A549 (cell line): ENCODE measurements at regions of chr17 and their contacts with region 1.

Region 1: DNA sequence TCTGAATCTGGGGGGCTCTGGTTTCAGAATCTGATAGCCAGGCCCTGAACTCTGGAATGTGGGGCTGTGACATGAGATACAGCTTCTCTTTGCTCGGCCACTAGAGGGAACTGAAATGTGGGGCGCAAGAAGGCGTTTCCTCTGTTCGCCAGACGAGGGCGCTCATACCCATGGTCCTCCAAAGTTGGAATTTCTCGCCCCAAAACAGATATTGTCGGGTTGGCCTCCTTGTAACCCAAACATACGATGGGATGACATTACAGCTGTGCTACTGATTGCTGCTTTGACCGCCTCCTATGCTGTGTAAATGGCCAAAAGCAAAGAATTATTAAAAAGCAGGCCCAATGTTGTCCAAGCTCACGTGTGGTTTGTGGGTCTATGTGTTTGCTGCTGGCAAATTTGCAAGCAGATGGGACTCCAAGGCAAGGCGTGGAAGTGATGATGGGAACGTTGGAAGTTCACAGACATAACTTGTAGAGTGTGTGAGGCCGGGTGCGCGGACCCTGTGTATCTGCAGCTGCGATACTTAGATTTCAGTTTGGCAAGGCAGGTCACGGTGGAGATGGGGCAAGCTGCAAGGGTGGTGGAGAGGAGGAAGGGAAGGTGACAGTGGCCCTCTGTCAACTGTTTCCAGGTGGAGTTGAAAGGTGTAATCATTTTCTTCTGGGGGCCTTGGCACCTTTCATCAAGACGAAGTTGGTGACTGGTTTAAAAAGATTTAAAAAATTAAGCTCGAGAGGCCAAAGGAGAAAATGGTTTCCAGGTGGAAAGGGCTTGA is 13.0 kb upstream of the MSI2 start:
- DNase-seq: peak; percentile 77 to 88
- ATAC-seq: peak; percentile 83 to 95
- H3K4me3 ChIP-seq: no peak overlapping the region
- H3K27ac ChIP-seq: peak overlapping the region; percentile 15 to 47; a peak in 3 of 6 replicates
- H3K4me1 ChIP-seq: peaks cover 8% of the 10 kb centered on the region; the same call in 1 of the 3 replicates
- CTCF ChIP-seq: peak; percentile 100
- EP300 ChIP-seq: no peak
- POLR2A ChIP-seq: no peak
- RAD21 ChIP-seq: peak; percentile 99

Region 2: GRCh38 chr17:56392051-56392673 is 851.2 kb before region 1 on chr17:
- CTCF ChIA-PET with region 1: no interaction called
- POLR2A ChIA-PET with region 1: no interaction called
- DNase-seq: no peak
- ATAC-seq: peak in 1 of 2 experiments; percentile 59; a peak in 2 of 6 replicates
- H3K4me3 ChIP-seq: no peak overlapping the region
- H3K27ac ChIP-seq: no peak overlapping the region
- H3K4me1 ChIP-seq: no peaks in the 10 kb centered on the region
- CTCF ChIP-seq: no peak
- EP300 ChIP-seq: no peak
- POLR2A ChIP-seq: no peak
- RAD21 ChIP-seq: no peak

Region 3: GRCh38 chr17:56908001-56908542 is 335.3 kb before region 1 on chr17:
- CTCF ChIA-PET with region 1: no interaction called
- POLR2A ChIA-PET with region 1: no interaction called
- DNase-seq: peak in 1 of 2 experiments; percentile 53
- ATAC-seq: peak; percentile 33 to 39; a peak in 3 of 6 replicates
- H3K4me3 ChIP-seq: no peak overlapping the region
- H3K27ac ChIP-seq: no peak overlapping the region
- H3K4me1 ChIP-seq: peaks cover 29% of the 10 kb centered on the region; the same call in 2 of the 3 replicates
- CTCF ChIP-seq: no peak
- EP300 ChIP-seq: no peak
- POLR2A ChIP-seq: no peak
- RAD21 ChIP-seq: no peak

Region 4: DNA sequence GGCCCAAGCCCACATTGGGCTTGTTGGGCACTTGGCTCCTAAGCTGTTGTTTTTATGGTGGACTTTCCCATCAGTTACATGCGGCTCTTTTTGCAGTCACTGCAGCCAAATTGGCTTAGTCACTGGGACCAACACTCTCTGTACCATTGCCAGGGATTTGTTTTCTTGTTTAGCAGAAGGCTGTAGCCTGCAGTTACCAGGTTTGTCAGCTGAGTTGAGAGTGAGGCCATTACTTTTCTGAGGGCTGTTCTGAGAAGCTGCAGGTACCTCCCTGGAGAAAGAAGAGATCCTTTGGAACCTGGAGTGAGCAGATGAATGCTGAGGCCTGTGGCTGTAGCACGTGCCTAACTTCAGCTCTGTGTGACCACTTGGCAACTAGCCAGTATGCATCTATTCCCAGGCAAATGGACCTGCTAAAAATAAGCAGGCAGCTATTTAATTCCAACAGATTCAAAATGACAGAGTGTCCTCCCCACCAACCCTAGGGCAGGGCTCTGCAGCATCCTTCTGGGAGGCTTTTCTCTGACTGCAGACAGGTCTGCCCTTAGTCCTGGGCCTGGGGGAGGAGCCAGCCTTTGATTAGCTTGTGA is 145.4 kb before region 1 on chr17:
- CTCF ChIA-PET with region 1: no interaction called
- POLR2A ChIA-PET with region 1: no interaction called
- DNase-seq: no peak
- ATAC-seq: peak in 1 of 2 experiments; percentile 47; a peak in 3 of 6 replicates
- H3K4me3 ChIP-seq: no peak overlapping the region
- H3K27ac ChIP-seq: peak overlapping the region in 1 of 2 experiments; percentile 25; a peak in 2 of 6 replicates
- H3K4me1 ChIP-seq: peaks cover 11% of the 10 kb centered on the region; the same call in 2 of the 3 replicates
- CTCF ChIP-seq: no peak
- EP300 ChIP-seq: no peak
- POLR2A ChIP-seq: no peak
- RAD21 ChIP-seq: no peak

Region 5: GRCh38 chr17:57115377-57115776 is 128.0 kb before region 1 on chr17:
- CTCF ChIA-PET with region 1: no interaction called
- POLR2A ChIA-PET with region 1: no interaction called
- DNase-seq: no peak
- ATAC-seq: no peak
- H3K4me3 ChIP-seq: no peak overlapping the region
- H3K27ac ChIP-seq: no peak overlapping the region
- H3K4me1 ChIP-seq: no peaks in the 10 kb centered on the region
- CTCF ChIP-seq: no peak
- EP300 ChIP-seq: no peak
- POLR2A ChIP-seq: no peak
- RAD21 ChIP-seq: no peak

Region 6: DNA sequence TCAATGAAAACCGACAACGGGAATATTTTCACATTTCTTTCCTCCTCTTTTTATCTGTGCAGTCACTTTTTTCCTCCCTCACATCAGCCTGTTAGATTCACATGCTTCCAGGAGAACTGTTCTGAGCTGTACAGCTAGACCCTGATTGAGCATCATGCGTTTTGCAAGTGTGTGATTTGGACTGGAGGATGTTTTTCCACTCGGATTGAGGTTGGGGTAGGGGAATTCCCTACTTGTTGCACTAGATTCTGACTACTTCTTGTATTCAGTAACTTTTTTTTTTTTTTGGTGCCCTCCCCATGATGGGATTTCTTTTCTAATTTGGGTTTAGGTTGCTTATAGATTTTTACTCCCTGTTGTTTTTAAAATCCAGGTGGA is 17.7 kb after region 1 on chr17:
- CTCF ChIA-PET with region 1: interaction called, 34 read pairs
- POLR2A ChIA-PET with region 1: no interaction called
- DNase-seq: no peak
- ATAC-seq: no peak
- H3K4me3 ChIP-seq: no peak overlapping the region
- H3K27ac ChIP-seq: no peak overlapping the region
- H3K4me1 ChIP-seq: peaks cover 25% of the 10 kb centered on the region; the same call in 2 of the 3 replicates
- CTCF ChIP-seq: no peak
- EP300 ChIP-seq: no peak
- POLR2A ChIP-seq: no peak
- RAD21 ChIP-seq: no peak

Region 7: GRCh38 chr17:57379237-57379894 is 136.0 kb after region 1 on chr17:
- CTCF ChIA-PET with region 1: interaction called, 16 read pairs
- POLR2A ChIA-PET with region 1: no interaction called
- DNase-seq: no peak
- ATAC-seq: peak in 1 of 2 experiments; percentile 34; a peak in 3 of 6 replicates
- H3K4me3 ChIP-seq: no peak overlapping the region
- H3K27ac ChIP-seq: peak overlapping the region; percentile 70 to 89
- H3K4me1 ChIP-seq: peaks cover 47% of the 10 kb centered on the region
- CTCF ChIP-seq: no peak
- EP300 ChIP-seq: no peak
- POLR2A ChIP-seq: no peak
- RAD21 ChIP-seq: no peak

Region 8: DNA sequence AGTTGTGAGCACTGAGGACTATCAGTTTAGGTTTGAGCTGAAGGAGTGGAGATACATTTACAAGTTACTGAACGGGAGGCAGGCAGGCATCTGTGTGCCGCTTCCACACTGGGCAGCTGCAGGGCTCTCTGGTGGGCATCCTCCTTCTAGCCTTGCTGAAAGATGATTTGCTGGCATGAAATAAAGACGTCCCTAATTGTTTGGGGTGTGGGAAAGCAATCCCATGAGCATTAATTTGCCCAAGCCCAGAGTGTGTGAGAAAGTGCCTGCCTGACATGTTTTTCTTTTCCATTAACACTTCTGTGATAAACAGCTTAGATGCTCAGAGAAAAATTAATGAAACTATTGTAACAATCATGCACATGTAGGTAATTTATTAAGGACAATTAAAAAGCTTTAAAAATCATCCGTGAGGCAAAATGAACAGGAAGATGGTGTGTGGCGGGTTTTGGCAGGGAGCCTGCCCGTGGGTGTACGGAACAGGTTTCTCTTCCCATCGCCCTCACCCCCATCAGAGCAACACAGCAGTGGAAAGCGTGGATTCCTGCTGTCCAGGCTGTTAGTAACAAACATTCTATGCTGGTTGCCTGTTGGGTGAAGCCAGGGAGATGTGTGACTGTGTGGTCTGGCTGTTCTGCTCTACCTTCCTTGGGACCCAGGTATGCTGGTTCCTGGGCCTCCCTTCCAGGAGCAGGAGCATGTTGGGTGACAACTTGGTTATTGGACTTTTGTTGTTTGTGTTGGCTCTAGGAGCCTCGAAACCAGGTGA is 204.8 kb after region 1 on chr17:
- CTCF ChIA-PET with region 1: interaction called, 60 read pairs
- POLR2A ChIA-PET with region 1: no interaction called
- DNase-seq: no peak
- ATAC-seq: no peak
- H3K4me3 ChIP-seq: no peak overlapping the region
- H3K27ac ChIP-seq: peak overlapping the region; percentile 10 to 32; a peak in 4 of 6 replicates
- H3K4me1 ChIP-seq: peaks cover 36% of the 10 kb centered on the region
- CTCF ChIP-seq: no peak
- EP300 ChIP-seq: no peak
- POLR2A ChIP-seq: no peak
- RAD21 ChIP-seq: no peak

Region 9: GRCh38 chr17:57597531-57598453 is 354.4 kb after region 1 on chr17:
- CTCF ChIA-PET with region 1: interaction called, 16 read pairs
- POLR2A ChIA-PET with region 1: no interaction called
- DNase-seq: peak; percentile 82 to 86
- ATAC-seq: peak; percentile 85 to 93
- H3K4me3 ChIP-seq: no peak overlapping the region
- H3K27ac ChIP-seq: peak overlapping the region; percentile 46 to 54; a peak in 5 of 6 replicates
- H3K4me1 ChIP-seq: peaks cover 15% of the 10 kb centered on the region
- CTCF ChIP-seq: peak; percentile 97
- EP300 ChIP-seq: no peak
- POLR2A ChIP-seq: no peak
- RAD21 ChIP-seq: peak; percentile 86 to 87

Region 10: GRCh38 chr17:57747221-57748017 is 504.1 kb after region 1 on chr17:
- CTCF ChIA-PET with region 1: interaction called, 108 read pairs
- POLR2A ChIA-PET with region 1: no interaction called
- DNase-seq: peak; percentile 79 to 84
- ATAC-seq: peak; percentile 80 to 91
- H3K4me3 ChIP-seq: no peak overlapping the region
- H3K27ac ChIP-seq: no peak overlapping the region
- H3K4me1 ChIP-seq: no peaks in the 10 kb centered on the region
- CTCF ChIP-seq: peak; percentile 96
- EP300 ChIP-seq: no peak
- POLR2A ChIP-seq: no peak
- RAD21 ChIP-seq: peak; percentile 93 to 98